H1 (cell line): ENCODE measurements at regions of chr16 and their contacts with region 1.

Region 1: DNA sequence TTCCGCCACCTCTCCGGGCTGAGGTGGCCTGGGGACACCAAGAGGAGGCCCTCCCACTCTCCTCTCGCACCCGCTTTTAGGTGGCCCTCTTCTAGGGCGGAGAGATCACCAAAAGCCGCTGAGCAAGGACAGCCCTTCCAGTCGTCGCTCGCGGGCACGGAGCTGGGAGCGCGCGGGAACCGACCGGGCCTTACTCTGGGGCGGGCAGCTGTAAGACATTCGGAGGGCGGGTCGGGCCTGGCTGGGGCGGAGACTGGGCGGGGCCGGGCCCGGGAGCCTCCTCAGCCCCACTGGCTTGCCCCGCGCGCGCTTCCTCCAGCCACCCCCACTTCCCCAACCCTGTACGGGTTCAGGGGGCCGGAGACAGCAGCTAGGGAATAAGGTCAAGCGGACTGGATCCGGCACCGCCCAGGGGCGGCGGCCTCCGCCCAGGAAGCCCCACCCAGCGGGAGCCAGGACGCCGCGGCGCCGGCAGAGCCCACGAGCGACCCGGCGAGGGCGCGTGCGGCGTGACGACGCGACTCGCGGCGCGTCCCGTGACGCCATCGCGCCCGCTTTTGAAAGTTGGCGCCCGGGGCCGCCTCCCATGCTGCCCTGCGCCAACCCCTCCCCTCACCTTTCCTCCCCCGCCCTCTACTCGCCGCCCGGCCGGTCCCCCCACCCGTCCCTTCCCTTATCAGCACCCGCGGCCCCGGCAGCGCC is 351 bp upstream of the CTCF start:
- DNase-seq: peak; percentile 72 to 93
- H3K4me3 ChIP-seq: peak overlapping the region; percentile 76 to 88 (median 82)
- H3K27ac ChIP-seq: peak overlapping the region; percentile 96
- H3K4me1 ChIP-seq: peaks cover 0 to 7% (median 1%) of the 10 kb centered on the region in 4 experiments; a peak in 4 of 7 replicates
- H3K27me3 ChIP-seq: no peaks in the 10 kb centered on the region
- CTCF ChIP-seq: no peak
- EP300 ChIP-seq: peak in 1 of 2 experiments; percentile 9; a peak in 1 of 3 replicates
- POLR2A ChIP-seq: peak; percentile 49 to 79
- RAD21 ChIP-seq: no peak

Region 2: DNA sequence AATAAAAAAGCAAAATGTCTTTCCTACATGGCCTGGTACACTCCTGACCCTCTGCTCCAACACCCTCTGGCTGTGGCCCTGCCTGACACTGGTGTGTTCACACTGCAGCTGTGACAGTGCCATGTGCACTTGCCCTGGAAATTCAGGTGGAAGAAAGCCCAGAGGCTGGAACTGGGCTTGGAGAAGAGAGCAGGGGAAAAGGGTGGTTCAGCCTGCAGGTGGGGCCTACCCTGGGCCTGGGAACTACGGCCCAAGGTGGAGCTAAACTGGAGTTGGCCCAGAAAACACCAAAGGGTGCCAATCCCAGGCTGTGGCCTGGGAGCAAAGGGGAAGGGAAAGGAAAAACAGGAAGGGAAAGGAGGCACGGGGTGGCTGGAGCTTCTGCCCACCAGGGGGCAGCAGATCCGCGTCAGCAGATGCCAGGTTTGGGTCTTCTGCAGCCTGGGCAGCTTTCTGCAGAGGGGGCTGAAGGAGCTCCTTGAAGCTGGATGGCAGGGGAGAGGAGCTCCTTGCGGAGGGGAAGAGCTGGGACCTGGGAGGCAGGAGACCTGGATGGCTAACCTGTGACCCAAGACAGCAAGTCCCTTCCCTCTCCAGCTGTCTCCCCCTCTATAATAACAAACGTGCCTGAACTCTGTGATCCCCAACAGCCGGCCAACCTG is 15.1 kb before region 1 on chr16:
- CTCF ChIA-PET with region 1: interaction called, 108 read pairs
- POLR2A ChIA-PET with region 1: interaction called, 105 read pairs
- DNase-seq: peak; percentile 70 to 92
- H3K4me3 ChIP-seq: no peak overlapping the region
- H3K27ac ChIP-seq: no peak overlapping the region
- H3K4me1 ChIP-seq: peaks cover 0 to 4% (median 2%) of the 10 kb centered on the region in 4 experiments; a peak in 3 of 7 replicates
- H3K27me3 ChIP-seq: no peaks in the 10 kb centered on the region; a peak in 3 of 7 replicates
- CTCF ChIP-seq: peak; percentile 95 to 97 (median 97)
- EP300 ChIP-seq: no peak
- POLR2A ChIP-seq: no peak
- RAD21 ChIP-seq: peak; percentile 92 to 94

Region 3: DNA sequence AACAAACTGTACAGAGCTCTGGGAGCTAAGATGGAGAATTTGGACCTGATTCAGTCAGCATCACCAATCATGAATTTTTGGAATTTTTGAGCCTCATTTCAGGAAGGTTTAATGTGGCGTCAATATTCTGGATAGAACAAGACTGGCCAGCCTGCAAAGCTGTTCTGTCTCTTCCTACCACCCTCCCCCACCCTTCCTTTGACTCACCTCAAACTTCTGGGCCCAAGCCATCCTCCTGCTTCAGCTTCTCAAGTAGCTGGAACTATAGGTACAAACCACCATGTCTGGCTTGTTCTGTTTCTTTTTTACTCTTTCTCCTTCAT is 33.0 kb after region 1 on chr16:
- CTCF ChIA-PET with region 1: interaction called, 7 read pairs
- POLR2A ChIA-PET with region 1: interaction called, 43 read pairs
- DNase-seq: no peak
- H3K4me3 ChIP-seq: peak overlapping the region in 1 of 4 experiments; percentile 48; a peak in 1 of 8 replicates
- H3K27ac ChIP-seq: no peak overlapping the region; the same call in 1 of the 2 replicates
- H3K4me1 ChIP-seq: peaks cover 0 to 30% (median 12%) of the 10 kb centered on the region in 4 experiments; a peak in 6 of 7 replicates
- H3K27me3 ChIP-seq: no peaks in the 10 kb centered on the region
- CTCF ChIP-seq: no peak
- EP300 ChIP-seq: no peak
- POLR2A ChIP-seq: no peak
- RAD21 ChIP-seq: no peak

Region 4: DNA sequence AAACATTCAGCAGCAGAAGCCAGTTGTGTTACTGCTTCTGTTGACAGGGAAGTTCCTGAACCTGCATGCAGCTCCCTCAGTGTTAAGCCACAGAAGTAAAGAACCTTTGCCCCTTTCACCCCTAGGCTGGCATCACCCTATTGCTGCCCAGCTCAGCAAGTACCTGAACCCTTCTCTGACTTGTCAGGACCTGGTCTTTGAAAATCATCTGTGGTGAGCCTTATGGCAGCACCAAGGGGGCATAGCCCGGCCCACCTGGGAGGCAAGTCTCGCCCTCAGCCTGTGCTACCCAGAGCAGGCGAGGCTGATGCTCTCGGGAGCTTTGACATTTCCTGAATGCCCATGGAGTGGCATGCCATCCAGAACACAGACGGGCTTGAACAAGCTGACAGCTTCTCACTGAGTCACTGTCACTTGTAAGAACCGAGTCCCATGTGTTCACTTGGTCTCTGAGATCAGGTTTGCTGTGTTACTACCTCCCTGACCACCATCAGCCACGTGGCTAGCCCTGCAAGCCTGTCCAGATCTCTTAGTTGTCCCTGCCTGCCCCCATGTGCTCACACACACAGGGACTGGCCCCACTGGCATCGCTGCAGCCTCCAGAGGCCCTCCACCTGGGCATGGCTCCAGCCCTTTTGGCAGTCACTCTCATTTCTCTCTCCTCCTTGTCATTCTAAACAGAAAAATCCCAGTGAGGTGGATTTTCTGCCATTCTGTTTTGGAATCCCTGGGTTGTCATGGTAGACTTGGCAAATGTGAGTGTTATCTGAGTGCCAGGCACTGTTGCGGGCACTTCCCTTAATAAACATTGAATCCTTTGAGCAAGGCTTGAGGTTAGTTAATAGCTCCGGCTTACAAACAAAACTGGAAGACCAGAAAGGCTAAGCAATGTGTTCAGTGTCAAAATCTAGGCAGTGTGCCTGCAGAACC is 80.1 kb after region 1 on chr16:
- CTCF ChIA-PET with region 1: interaction called, 14 read pairs
- POLR2A ChIA-PET with region 1: interaction called, 27 read pairs
- DNase-seq: no peak
- H3K4me3 ChIP-seq: no peak overlapping the region
- H3K27ac ChIP-seq: no peak overlapping the region
- H3K4me1 ChIP-seq: peaks cover 0 to 9% (median 2%) of the 10 kb centered on the region in 4 experiments; a peak in 5 of 7 replicates
- H3K27me3 ChIP-seq: peaks cover 0 to 11% (median 6%) of the 10 kb centered on the region in 4 experiments; a peak in 4 of 7 replicates
- CTCF ChIP-seq: no peak
- EP300 ChIP-seq: no peak
- POLR2A ChIP-seq: no peak
- RAD21 ChIP-seq: no peak

Region 5: DNA sequence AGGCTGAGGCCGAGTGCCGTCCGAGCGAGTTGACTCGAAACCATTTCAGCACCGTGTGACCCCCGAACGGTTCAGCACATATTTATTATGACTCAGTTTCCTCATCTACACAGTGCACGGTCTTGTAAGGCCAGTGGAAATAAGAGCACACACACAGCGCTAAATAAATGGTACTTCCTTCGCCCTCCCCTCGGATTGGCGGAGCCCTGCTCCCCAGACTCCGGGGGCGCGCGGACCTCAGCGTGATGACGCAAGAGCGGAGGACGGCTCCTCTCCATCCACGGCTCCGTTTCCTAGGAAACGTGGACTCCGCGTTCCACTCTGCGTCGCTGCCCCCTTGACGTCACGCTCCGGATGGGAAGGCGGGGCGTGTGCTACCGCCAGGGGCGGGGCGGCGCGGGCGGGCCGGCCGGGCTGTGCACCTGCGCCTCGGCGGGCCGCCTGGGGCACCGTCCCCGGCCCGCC is 98.6 kb after region 1 on chr16 and contains the start of gene PARD6A:
- CTCF ChIA-PET with region 1: interaction called, 22 read pairs
- POLR2A ChIA-PET with region 1: interaction called, 12 read pairs
- DNase-seq: peak; percentile 93 to 94
- H3K4me3 ChIP-seq: peak within 1 kb of the TSS; percentile 86 to 98 (median 89)
- H3K27ac ChIP-seq: peak within 1 kb of the TSS; percentile 81
- H3K4me1 ChIP-seq: peaks cover 0 to 18% (median 10%) of the 10 kb centered on the region in 4 experiments; a peak in 5 of 7 replicates
- H3K27me3 ChIP-seq: peaks cover 0 to 2% (median 0%) of the 10 kb centered on the region in 4 experiments; a peak in 1 of 7 replicates
- CTCF ChIP-seq: 0 out of 4 replicates have a peak, but pooled peaks of 1 of the 3 experiments have one; percentile 5
- EP300 ChIP-seq: no peak
- POLR2A ChIP-seq: peak in 1 of 2 experiments; percentile 16; a peak in 1 of 3 replicates
- RAD21 ChIP-seq: no peak
- total RNA-seq, gene PARD6A: 14.4 and 15.1 TPM in 2 replicates